RWPE1 (cell line): ENCODE measurements at regions of chr9 and their contacts with region 1.

Region 1: GRCh38 chr9:121059998-121060636 is 10.0 kb upstream of the C5 start:
- DNase-seq: peak; percentile 79
- H3K27ac ChIP-seq: no peak overlapping the region
- CTCF ChIP-seq: peak; percentile 98

Region 2: DNA sequence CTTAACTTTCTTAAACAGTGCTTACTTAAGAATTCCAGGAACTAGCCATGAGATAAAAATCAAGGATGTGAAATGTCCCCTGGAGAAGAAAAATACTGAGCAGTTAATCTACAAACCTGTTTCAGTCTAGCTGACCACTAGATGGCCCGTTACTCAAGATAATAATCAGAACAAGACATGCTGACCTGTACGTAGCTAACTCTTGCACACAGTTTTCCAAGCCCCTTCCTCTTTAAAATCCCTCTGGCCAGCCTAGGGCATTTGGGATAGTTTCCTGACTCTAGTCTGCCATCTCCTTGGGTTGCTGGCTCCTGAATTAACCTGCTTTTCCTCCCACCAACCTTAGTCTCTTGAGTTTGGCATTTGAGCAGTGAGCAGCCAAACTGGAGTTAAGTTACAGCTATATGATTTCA is 74.3 kb before region 1 on chr9:
- CTCF ChIA-PET with region 1: interaction called, 28 read pairs
- POLR2A ChIA-PET with region 1: no interaction called
- DNase-seq: peak; percentile 62
- H3K27ac ChIP-seq: no peak overlapping the region
- CTCF ChIP-seq: peak; percentile 91